Posterior vena cava (tissue), 2 donors: ENCODE measurements at regions of chr3 and their contacts with region 1.

Region 1: GRCh38 chr3:119630128-119630879 is 30.1 kb downstream of the POPDC2 start:
- DNase-seq: no peak

Region 2: DNA sequence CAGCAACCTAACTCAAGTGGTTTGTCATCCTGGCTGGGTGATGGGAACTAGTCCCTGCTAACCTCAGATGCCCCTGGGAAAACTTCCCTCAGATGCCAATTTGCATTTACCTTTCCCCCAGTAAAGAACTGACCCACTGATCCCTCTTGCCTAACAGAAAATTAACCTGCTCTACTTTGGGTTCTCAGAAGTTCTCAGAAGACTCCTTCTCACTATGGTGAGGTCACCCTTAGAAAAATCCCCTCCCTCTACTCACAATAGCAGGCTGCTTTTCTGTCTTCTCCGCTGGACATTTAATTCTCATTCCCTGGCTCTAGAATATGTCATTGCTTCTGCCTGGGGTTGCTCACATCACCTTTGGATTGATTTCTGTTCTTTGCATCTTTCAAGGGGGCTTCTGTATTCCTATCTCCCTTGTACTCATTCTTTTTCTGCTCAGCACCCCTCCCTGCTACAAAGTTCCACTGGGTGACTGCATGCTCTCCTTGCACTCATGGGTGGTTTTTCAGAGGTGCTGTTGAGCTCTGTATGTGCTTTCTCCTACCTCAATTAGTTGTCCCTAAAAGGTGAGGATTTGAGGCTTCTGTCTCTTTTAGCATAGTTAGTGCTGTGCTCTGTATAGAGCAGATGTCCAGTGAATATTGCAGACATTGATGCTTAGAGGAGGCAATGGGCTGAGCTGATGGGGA is 31.8 kb before region 1 on chr3:
- intact Hi-C with region 1: loop called in 1 of 2 experiments (anchors 5 kb)
- DNase-seq: no peak